Ascending aorta (tissue), 2 donors: ENCODE measurements at regions of chr2 and their contacts with region 1.

Region 1: GRCh38 chr2:240434728-240435456 is 571 bp upstream of the GPC1 start:
- DNase-seq: peak; percentile 53 to 95
- H3K4me3 ChIP-seq: peak overlapping the region; percentile 98
- H3K27ac ChIP-seq: peak overlapping the region; percentile 92 to 98
- H3K4me1 ChIP-seq: peaks cover 23 to 28% of the 10 kb centered on the region in 2 donors
- H3K27me3 ChIP-seq: no peaks in the 10 kb centered on the region
- CTCF ChIP-seq: no peak

Region 2: DNA sequence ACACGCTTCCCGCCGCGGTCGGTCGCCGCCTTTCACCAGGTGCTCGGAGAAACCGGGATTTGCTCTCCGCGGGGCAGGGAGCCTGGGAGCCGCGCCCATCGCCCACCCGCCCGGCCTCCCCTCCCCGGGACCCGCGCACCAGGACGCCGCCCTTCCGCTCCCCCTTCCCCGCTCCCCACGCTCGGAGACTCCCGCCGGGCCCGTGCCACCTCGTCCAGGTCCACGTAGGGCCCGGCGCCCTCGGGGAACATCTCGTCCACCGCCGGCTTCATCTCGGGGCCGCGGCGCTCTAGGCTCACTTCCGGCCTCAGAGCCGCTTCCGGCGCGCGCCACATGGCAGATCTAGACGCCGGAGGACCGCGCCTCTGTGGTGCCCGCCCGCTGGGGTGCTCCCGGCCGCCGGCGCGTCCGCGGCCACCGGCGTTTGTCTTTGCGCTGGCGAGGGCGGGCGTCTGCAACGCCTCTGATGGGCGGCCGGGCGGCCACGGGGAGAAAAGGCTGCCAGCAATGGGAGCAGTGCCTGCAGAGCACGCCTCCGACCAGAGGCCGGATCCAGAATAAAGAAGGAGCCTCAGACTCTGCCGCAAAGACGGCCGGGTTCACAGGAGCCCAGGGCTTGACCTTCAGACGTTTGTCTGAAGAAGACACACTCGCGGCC is 298.8 kb before region 1 on chr2 and contains the start of gene COPS9:
- intact Hi-C with region 1: loop called (anchors 5 kb)
- DNase-seq: peak; percentile 39 to 91
- H3K4me3 ChIP-seq: peak within 1 kb of the TSS; percentile 85 to 86
- H3K27ac ChIP-seq: peak within 1 kb of the TSS; percentile 41 to 56
- H3K4me1 ChIP-seq: peaks cover 5 to 11% of the 10 kb centered on the region in 2 donors
- H3K27me3 ChIP-seq: no peaks in the 10 kb centered on the region
- CTCF ChIP-seq: no peak
- total RNA-seq, gene COPS9: 4.7 TPM

Region 3: GRCh38 chr2:240259201-240259923 is 175.5 kb before region 1 on chr2:
- intact Hi-C with region 1: loop called (anchors 1 kb)
- DNase-seq: peak; percentile 76 to 97
- H3K4me3 ChIP-seq: peak overlapping the region in 1 of 2 donors; percentile 8
- H3K27ac ChIP-seq: peak overlapping the region; percentile 94 to 98
- H3K4me1 ChIP-seq: peaks cover 18 to 26% of the 10 kb centered on the region in 2 donors
- H3K27me3 ChIP-seq: no peaks in the 10 kb centered on the region
- CTCF ChIP-seq: peak in 2 of 3 experiments; percentile 23 to 46

Region 4: DNA sequence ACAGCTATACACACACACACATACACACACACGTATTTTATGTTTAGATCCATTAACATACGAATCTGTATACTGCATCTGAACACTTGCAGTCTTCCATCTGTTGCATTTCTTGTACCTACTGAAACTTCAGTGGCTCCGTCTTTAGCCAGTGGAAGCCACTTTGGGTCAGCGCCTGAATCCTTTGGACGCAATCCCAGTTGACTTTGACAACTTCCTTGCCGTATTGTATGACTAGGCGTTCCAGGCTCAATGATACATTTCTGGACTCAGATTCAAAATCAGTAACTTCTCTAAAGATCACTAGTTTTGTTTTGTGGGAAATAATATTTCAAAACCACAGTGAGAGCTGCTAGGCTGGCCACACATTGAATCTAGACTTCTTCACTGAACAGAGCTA is 100.9 kb before region 1 on chr2:
- intact Hi-C with region 1: no loop called
- DNase-seq: peak in 1 of 2 donors; percentile 37
- H3K4me3 ChIP-seq: no peak overlapping the region
- H3K27ac ChIP-seq: no peak overlapping the region
- H3K4me1 ChIP-seq: no peaks in the 10 kb centered on the region
- H3K27me3 ChIP-seq: no peaks in the 10 kb centered on the region
- CTCF ChIP-seq: no peak

Region 5: DNA sequence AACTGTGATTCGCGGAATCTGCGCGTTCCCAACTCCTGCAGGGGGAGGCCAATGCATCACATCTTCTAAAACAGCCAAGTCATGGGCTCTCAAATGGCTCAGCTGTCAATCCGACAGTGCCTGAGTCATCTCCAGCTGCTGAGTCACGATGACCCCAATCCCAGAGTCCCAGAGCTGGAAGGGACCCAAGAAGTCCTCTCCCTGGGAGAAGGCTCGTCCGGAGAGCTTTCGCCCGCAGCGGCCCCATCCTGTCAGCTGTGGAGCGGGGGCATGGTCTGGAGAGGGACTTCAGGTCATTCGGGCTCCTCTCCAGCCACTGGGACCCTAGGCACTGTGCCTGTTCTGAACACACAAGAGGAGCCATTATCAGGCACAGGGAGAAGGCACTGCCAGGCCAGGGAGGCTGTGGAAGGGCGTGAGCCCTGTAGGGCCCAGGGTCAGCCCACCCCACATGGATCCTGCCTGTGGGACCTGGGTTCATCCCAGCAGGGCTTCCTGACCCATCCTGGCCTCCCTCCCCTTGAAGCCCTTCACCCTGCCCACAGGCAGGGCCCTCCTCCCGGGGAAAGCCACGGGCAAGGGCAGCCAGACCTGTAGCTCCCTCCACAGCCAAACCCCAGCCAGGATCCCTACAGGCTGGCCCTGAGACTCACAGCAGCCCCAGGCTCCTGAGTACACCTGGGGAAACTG is 47.1 kb before region 1 on chr2:
- intact Hi-C with region 1: loop called (anchors 2 kb)
- DNase-seq: peak in 1 of 2 donors; percentile 77
- H3K4me3 ChIP-seq: no peak overlapping the region
- H3K27ac ChIP-seq: peak overlapping the region in 1 of 2 donors; percentile 19
- H3K4me1 ChIP-seq: peaks cover 0 to 9% of the 10 kb centered on the region in 2 donors
- H3K27me3 ChIP-seq: no peaks in the 10 kb centered on the region
- CTCF ChIP-seq: no peak

Region 6: GRCh38 chr2:240560480-240561326 is 125.8 kb after region 1 on chr2:
- intact Hi-C with region 1: loop called (anchors 5 kb)
- DNase-seq: peak; percentile 96 to 100
- H3K4me3 ChIP-seq: peak overlapping the region; percentile 68 to 72
- H3K27ac ChIP-seq: peak overlapping the region; percentile 94 to 98
- H3K4me1 ChIP-seq: peaks cover 20 to 29% of the 10 kb centered on the region in 2 donors
- H3K27me3 ChIP-seq: no peaks in the 10 kb centered on the region
- CTCF ChIP-seq: peak; percentile 30 to 34 (median 34)

Region 7: DNA sequence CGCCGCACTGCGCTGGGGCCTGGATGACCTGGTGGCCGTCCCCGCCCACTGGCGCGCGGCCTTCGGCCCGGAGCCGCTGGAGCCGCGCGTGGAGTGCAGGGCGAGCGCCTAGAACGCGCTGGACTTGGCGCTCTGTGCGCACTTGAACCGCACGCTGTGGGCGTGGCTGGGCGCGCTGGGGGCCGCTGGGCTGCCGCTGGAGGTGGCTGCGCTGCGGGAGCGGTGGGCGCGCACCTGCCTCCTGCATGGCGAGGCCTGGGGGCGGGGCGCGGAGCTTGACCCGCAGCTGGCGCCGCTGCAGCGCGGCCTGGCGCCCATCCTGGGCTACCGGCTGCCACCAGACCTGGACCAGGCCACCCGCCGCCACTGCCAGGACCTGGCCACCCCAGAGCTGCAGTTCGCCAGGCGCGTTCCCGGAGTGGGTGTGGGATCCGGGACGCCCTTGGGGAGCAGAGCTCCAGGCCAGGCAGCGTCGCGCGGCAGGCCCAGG is 237.9 kb after region 1 on chr2:
- intact Hi-C with region 1: no loop called
- DNase-seq: no peak
- H3K4me3 ChIP-seq: no peak overlapping the region
- H3K27ac ChIP-seq: no peak overlapping the region
- H3K4me1 ChIP-seq: no peaks in the 10 kb centered on the region
- H3K27me3 ChIP-seq: no peaks in the 10 kb centered on the region
- CTCF ChIP-seq: no peak